Common myeloid progenitor, CD34-positive (primary cell): ENCODE measurements at regions of chr1 and their contacts with region 1.

Region 1: DNA sequence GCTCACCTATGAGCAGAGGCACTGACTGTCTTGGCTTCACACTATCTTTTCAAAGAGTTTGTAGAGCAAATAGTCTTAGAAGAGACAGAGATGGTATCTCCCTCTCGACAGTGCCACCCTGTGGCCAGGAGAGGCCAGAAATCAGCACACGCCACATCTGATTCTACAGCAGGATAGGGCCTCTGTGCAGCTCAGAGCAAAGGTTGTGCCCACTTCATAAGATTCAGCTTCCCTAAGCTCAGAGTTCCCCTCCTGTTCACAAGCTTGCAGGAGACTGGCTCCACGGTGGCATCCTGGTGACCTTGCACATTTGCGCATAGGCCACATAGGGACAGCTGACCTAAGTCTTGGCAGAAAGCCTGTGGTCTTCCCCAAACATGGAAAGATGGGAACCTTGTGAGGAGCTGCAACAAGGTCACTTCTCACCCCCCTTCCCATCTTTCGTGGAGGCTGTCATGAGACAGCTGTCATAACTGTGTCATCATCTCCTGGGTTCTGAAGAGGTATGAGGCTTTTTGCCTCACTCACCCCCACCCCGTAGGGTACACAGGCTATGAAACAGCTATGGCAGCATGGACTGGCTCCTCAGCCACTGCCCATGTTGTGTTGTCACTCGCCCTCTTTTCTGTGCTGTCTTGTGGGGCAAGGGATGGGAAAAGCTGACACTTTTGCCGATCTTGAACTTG is 3.0 kb downstream of the ITLN2 start:
- DNase-seq: peak; percentile 65 to 85 (median 77)
- H3K4me3 ChIP-seq: no peak overlapping the region
- H3K27ac ChIP-seq: no peak overlapping the region
- H3K4me1 ChIP-seq: peaks cover 0 to 12% (median 0%) of the 10 kb centered on the region in 4 experiments
- H3K27me3 ChIP-seq: no peaks in the 10 kb centered on the region

Region 2: DNA sequence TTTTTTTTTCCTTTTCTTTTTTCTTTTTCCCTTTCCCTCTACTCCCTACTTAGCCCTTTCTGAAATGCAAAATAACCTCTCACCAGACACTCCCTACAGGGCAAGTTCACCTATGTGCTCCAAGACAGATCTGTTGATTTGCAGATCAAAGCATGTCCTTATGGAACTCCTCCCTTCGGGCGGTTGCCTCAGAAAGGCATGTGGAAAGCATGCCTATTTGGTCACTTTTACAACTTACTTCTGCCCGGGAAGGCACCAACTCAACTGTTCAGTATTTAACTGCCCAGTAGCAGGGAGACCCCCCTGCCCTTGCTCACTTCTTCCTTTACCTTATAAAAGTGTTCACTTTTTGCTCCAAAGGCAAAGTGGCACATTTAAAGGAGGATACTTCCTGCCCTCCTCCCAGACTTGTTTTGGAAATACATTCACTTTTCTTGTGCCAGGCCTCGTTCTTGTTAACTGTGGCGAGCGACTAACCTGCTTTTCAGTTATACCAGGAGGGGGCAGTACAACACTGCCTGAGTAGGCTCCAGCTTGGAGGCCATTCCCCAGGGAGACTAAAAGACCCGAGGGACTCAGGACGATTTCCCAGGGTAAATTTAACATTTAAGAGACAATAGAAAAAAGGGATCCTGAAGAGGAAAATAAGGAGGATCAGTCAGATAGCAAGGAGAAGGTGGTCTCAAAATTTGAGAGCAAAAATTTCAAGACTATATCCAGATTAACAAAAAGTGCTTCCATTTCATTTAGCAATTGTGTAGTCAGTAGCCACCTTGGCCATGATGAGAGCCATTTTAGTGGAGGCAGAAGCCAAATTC is 224.9 kb before region 1 on chr1:
- CTCF ChIA-PET with region 1: interaction called, 50 read pairs
- POLR2A ChIA-PET with region 1: no interaction called
- DNase-seq: peak; percentile 74 to 83 (median 81)
- H3K4me3 ChIP-seq: peak overlapping the region in 1 of 7 experiments; percentile 4
- H3K27ac ChIP-seq: no peak overlapping the region
- H3K4me1 ChIP-seq: peaks cover 7 to 41% (median 16%) of the 10 kb centered on the region in 4 experiments
- H3K27me3 ChIP-seq: no peaks in the 10 kb centered on the region

Region 3: DNA sequence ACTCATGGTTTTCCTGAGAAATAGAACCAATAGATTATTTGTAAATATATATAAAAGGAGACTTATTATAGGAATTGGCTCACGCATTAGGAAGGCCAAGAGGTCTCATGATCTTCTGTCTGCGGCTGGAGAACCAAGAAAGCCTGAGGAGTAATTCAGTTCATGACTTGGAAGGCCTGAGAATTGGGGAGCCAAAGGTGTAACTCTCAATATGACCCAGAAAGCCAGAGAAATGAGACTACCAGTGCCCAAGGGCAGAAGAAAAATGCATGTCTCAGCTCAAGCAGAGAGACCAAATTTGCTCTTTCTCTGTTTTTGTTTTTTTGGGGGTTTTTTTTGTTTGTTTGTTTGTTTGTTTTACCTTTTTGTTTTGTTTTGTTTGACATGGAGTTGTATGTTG is 193.1 kb before region 1 on chr1:
- CTCF ChIA-PET with region 1: no interaction called
- POLR2A ChIA-PET with region 1: no interaction called
- DNase-seq: no peak
- H3K4me3 ChIP-seq: no peak overlapping the region
- H3K27ac ChIP-seq: no peak overlapping the region
- H3K4me1 ChIP-seq: no peaks in the 10 kb centered on the region
- H3K27me3 ChIP-seq: no peaks in the 10 kb centered on the region

Region 4: GRCh38 chr1:160813215-160813614 is 138.4 kb before region 1 on chr1:
- CTCF ChIA-PET with region 1: no interaction called
- POLR2A ChIA-PET with region 1: no interaction called
- DNase-seq: peak in 2 of 3 donors; percentile 13 to 22
- H3K4me3 ChIP-seq: no peak overlapping the region
- H3K27ac ChIP-seq: no peak overlapping the region
- H3K4me1 ChIP-seq: no peaks in the 10 kb centered on the region
- H3K27me3 ChIP-seq: peaks cover 0 to 6% (median 0%) of the 10 kb centered on the region in 5 experiments

Region 5: DNA sequence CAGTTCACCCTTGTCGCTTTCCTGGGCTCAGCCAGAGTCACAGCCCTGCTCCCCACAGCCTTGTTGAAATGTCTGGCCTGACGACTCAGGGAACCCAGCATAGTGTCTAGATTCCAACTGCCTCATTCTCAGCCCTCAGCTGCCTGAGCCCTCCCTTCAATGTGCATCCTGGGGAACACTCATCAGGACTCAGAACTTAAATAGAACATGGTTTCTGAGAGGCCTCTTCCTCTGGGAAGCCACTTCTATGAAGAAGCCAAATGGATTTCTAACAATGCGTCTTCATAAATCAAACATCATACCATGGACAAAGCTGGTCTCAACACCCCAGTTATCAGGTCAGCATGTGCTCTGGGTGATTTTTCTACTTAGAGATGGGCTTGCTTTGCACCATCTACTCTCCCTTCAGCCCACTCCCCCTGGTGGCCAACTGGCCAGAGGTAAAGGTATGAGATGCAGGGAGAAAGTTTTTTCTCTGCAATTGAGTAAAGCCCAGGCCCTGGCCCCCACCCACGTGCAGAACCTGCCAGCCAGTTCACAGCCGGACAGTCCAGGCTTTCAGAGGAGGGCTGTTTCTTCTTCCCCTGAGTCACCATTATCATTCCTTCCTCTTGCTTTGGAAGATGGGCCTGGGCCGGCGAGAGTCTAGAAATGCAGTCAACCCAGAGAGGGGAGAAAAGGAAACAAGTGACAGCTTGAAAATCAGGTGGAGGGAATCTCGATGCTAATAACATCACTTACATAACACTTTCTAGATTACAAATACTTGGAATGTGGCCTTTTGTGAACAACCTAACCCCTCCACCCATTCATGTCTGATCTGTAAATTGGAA is 121.0 kb before region 1 on chr1:
- CTCF ChIA-PET with region 1: interaction called, 152 read pairs
- POLR2A ChIA-PET with region 1: interaction called, 3 read pairs
- DNase-seq: peak; percentile 57 to 74 (median 74)
- H3K4me3 ChIP-seq: no peak overlapping the region
- H3K27ac ChIP-seq: no peak overlapping the region
- H3K4me1 ChIP-seq: peaks cover 0 to 6% (median 2%) of the 10 kb centered on the region in 4 experiments
- H3K27me3 ChIP-seq: no peaks in the 10 kb centered on the region

Region 6: DNA sequence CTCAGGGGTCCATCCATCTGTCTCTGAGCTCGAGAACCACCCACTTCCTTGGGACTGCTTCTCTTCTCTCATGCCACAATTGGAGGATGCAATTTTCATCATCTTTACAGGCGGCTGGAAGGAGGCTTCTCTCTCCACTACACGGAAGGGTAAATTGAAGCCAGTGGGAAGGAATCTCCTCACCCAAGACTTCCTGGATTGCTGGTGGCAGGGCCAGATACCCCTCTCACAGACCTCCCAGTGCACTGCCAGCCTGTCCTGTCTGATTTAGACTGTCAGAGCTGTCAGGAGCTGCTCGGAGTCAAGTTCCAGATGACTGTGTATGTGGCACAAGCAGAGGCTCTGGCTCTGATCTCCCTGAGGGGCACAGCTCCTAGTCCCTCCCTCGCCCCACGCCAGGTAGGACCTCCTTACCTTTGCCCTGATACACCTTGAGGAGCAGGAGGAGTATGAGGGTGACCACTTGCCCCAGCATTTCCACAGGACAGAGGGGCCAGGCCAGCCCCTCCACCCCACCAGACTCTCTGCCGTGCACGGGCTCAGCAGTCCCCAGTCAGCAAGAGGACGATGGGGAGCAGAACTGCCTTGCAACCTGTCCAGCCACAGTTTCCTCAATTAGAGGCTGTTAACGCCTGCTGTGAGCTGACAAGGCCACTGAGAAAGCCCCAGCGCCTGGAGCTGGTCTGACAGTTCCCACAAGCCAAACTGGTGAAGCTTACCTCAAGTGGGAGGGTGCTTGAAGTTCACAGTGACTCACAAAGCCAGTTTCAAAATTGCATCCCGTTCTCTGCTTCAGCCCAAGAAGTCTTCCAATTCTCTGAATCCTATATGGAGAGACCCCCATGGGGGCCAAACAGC is 89.2 kb before region 1 on chr1 and contains the start of gene CD244:
- CTCF ChIA-PET with region 1: interaction called, 10 read pairs
- POLR2A ChIA-PET with region 1: no interaction called
- DNase-seq: peak; percentile 89 to 99 (median 98)
- H3K4me3 ChIP-seq: peak within 1 kb of the TSS; percentile 19 to 74 (median 64)
- H3K27ac ChIP-seq: peak within 1 kb of the TSS; percentile 71 to 89
- H3K4me1 ChIP-seq: peaks cover 22 to 72% (median 68%) of the 10 kb centered on the region in 4 experiments
- H3K27me3 ChIP-seq: no peaks in the 10 kb centered on the region

Region 7: GRCh38 chr1:161420763-161421455 is 469.3 kb after region 1 on chr1:
- CTCF ChIA-PET with region 1: no interaction called
- POLR2A ChIA-PET with region 1: no interaction called
- DNase-seq: peak in 2 of 3 donors; percentile 28 to 44
- H3K4me3 ChIP-seq: peak overlapping the region in 3 of 7 experiments; percentile 48 to 70 (median 68)
- H3K27ac ChIP-seq: no peak overlapping the region
- H3K4me1 ChIP-seq: no peaks in the 10 kb centered on the region
- H3K27me3 ChIP-seq: peaks cover 0 to 8% (median 0%) of the 10 kb centered on the region in 5 experiments